Sciatic nerve (tissue), 2 donors: ENCODE measurements at regions of chr2 and their contacts with region 1.

Region 1: DNA sequence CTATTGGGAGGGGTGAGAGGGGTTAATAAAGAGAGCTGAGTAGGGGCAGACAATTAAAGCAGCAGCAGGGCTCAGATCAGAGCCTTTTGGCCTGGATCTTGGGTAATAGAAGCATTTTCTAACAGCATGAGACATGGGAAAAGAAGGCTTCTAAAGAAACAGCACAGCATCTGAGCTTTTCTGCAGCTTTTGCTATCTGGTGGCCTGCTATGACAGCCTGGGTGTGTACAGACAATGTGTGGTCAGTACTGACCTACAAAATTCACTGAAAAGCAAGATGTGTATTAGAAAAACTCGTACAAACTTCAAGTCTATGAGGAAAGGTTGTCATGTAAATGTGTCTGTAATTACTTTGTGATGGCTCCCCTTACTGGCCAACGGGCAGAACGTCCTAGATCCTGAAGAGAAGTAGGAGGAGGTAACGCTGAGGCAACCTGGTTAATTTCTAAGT is 95.6 kb downstream of the GALNT3 start:
- DNase-seq: no peak
- ATAC-seq: peak; percentile 77

Region 2: DNA sequence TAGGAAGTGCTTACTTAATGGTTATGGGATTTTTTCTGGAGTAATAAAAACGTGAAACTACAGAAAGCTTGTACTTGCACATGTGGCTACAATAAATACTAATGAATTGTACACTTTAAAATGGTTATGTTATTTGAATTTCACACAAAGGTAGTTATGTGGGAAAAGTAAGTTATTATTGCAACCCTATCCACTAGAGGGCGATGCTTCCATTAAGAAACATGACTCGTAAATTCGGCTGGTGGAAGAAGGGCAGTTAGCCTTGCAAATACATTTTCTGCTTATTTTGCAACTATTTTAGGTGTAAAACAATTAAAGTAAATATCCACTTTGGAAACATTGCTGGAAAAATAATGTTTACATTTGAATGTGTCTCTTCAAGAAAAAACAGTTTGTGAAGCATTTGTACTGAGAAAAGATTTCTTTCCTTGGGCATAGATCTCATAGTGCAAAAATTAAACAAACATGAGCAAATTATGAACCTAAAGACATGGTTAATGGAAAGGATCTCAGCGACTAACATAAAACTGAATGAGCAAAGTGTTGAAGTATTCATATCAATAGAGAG is 297.1 kb before region 1 on chr2:
- intact Hi-C with region 1: loop called (anchors 10 kb)
- DNase-seq: no peak
- ATAC-seq: peak; percentile 62

Region 3: GRCh38 chr2:165427686-165428085 is 270.8 kb before region 1 on chr2:
- intact Hi-C with region 1: no loop called
- DNase-seq: no peak
- ATAC-seq: peak; percentile 36